ENCODE measurements at regions of chr15 and their contacts with region 1.

Region 1: DNA sequence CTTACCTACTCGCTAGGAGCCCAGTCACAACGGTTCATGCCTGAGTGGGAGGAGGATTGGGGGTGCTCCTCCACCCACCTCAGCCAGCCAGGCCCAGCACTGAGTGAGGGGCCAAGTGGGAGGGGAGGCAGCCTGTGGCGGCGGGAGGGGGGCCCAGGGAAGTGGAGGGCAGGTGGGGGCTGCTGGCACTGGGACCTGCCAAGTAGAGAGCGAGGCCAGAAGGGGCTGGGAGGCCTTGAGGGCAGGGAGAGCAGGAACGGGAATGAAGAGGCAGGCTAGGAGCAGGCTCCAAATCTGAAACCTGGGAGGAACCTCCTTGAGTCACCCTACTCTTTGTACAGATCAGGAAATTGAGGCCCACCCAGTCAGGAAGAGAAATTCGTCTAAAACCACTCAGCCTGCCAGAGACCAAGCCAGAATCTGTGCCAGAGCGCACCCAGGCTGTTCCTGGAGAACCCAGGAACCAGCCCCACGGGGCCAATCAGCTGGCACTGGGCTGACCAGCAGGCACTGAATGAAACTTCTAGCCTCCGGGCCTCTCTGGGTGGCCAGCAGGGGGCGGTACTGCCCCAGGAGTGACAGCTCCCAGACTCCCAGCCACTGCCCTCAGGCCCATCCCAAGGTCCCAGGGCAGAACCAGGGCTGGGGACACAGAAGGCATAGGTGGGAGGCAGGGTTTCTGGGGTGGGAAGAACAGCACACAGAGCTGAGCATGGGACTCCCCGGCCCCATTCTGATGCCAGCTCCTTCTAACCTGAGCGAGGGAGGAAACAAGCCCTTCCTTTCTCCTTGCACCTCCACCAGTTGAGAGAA is 14.8 kb upstream of the CYP11A1 start:
- DNase-seq: no peak
- H3K4me3 ChIP-seq: no peak overlapping the region
- CTCF ChIP-seq: peak; percentile 98

Region 2: GRCh38 chr15:74202452-74203428 is 179.5 kb before region 1 on chr15 and contains the start of gene STRA6:
- CTCF ChIA-PET with region 1: no interaction called
- POLR2A ChIA-PET with region 1: no interaction called
- DNase-seq: no peak
- H3K4me3 ChIP-seq: no peak within 1 kb of the TSS
- CTCF ChIP-seq: no peak

Region 3: DNA sequence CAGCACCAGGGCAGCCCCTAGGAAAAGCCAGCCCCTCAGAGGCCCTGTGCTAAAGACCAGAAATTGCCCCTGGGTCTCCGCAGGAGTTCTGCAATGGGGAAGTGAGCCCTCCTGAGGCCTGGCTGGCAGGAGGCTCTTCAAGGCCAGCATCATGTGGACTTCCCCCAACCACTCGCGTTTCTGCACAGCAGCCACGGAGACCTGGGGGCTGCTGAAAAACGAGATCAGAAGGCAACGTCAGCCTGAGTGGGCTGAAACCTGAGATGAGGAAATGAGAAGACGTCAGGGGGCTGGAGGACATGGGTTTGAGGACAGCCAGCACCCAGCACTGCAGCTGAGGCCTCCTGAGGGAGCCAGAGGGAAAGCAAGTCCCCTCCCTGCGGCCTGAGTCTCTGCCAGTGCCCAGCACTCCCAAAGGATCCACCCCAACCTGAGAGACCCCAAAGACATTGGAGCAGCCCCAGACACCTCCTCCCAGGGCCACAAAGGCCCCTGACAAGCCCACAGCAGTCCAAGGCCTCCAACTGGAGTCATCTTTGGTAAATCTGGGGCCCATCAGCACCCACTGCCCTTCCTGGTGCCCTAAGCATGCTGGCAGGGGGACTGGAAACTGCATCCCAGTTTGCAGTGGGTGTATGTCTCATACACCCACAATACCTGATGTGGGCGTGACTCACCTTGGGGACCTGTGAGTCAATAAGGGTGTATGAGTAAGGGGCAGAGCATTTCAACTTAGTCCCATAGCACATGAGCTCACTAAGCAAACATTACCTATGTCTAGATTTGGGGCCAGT is 14.4 kb after region 1 on chr15:
- CTCF ChIA-PET with region 1: interaction called, 106 read pairs
- POLR2A ChIA-PET with region 1: interaction called, 4 read pairs
- DNase-seq: no peak
- H3K4me3 ChIP-seq: no peak overlapping the region
- CTCF ChIP-seq: peak; percentile 15

Region 4: GRCh38 chr15:74460871-74461846 is 78.9 kb after region 1 on chr15 and contains the start of gene UBL7:
- CTCF ChIA-PET with region 1: interaction called, 1,700 read pairs
- POLR2A ChIA-PET with region 1: no interaction called
- DNase-seq: peak; percentile 67
- H3K4me3 ChIP-seq: peak within 1 kb of the TSS; percentile 92
- CTCF ChIP-seq: peak; percentile 38

Region 5: GRCh38 chr15:74489518-74490338 is 107.5 kb after region 1 on chr15:
- CTCF ChIA-PET with region 1: interaction called, 161 read pairs
- POLR2A ChIA-PET with region 1: no interaction called
- DNase-seq: no peak
- H3K4me3 ChIP-seq: no peak overlapping the region
- CTCF ChIP-seq: peak; percentile 82

Region 6: GRCh38 chr15:74635228-74635627 is 253.0 kb after region 1 on chr15:
- CTCF ChIA-PET with region 1: interaction called, 159 read pairs
- POLR2A ChIA-PET with region 1: no interaction called
- DNase-seq: no peak
- H3K4me3 ChIP-seq: no peak overlapping the region
- CTCF ChIP-seq: peak; percentile 86